ENCODE measurements at regions of chr7 and their contacts with region 1.

Region 1: GRCh38 chr7:101936611-101937231 is 119.3 kb downstream of the CUX1 start:
- DNase-seq: peak; percentile 27
- H3K4me3 ChIP-seq: peak overlapping the region; percentile 20
- H3K27ac ChIP-seq: peak overlapping the region; percentile 82
- H3K4me1 ChIP-seq: peaks cover 100% of the 10 kb centered on the region
- CTCF ChIP-seq: no peak

Region 2: DNA sequence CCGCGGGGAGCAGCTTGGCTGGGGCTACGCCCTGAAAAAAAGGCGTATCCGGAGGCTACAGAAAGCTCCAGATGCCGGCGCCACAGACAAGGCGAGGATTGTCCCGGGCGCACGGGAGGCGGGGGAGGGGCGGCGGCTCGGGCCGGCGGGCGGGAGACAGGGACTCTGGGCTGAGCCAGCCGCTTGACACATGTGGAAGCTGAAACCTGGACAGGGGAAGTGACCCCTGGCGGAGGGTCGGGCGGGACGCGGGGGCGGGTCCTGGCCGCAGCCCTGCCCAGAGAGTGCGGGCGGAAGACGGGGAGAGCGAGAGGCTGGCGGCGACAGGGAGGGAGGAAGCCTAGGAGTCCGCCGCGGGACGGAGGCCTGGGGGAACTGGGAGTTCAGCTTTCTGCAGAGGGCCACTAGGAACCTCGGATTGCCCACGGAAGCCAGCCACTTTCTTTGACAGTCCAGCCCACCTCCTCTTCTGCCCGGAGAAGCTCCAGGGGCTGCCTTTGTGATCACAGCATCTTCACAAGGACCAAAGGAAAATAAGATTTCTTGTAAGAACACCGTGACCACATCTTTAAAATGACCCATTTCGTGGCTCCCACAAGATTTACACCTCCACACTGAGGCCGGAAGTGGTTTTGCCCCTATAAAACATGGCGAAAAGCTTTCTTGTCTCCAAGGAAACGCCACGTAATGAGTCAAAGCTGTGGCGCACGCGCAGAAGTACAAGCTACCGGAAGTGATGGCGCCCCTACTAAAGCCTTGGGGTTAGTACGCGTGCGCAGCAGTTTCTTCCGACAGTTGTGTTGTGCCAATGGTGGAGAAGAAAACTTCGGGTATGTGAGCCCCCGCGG is 719.1 kb before region 1 on chr7 and contains the starts of genes PLOD3 and ZNHIT1:
- CTCF ChIA-PET with region 1: no interaction called
- POLR2A ChIA-PET with region 1: no interaction called
- intact Hi-C with region 1: no loop called
- DNase-seq: peak; percentile 99
- H3K4me3 ChIP-seq: peak within 1 kb of the TSS; percentile 95
- H3K27ac ChIP-seq: peak within 1 kb of the TSS; percentile 48
- H3K4me1 ChIP-seq: peaks cover 18% of the 10 kb centered on the region
- CTCF ChIP-seq: 0 out of 2 replicates have a peak, but pooled peaks have one; percentile 6
- total RNA-seq, gene PLOD3: 9.2 and 12.1 TPM in 2 replicates
- total RNA-seq, gene ZNHIT1: 63.8 and 77.3 TPM in 2 replicates

Region 3: DNA sequence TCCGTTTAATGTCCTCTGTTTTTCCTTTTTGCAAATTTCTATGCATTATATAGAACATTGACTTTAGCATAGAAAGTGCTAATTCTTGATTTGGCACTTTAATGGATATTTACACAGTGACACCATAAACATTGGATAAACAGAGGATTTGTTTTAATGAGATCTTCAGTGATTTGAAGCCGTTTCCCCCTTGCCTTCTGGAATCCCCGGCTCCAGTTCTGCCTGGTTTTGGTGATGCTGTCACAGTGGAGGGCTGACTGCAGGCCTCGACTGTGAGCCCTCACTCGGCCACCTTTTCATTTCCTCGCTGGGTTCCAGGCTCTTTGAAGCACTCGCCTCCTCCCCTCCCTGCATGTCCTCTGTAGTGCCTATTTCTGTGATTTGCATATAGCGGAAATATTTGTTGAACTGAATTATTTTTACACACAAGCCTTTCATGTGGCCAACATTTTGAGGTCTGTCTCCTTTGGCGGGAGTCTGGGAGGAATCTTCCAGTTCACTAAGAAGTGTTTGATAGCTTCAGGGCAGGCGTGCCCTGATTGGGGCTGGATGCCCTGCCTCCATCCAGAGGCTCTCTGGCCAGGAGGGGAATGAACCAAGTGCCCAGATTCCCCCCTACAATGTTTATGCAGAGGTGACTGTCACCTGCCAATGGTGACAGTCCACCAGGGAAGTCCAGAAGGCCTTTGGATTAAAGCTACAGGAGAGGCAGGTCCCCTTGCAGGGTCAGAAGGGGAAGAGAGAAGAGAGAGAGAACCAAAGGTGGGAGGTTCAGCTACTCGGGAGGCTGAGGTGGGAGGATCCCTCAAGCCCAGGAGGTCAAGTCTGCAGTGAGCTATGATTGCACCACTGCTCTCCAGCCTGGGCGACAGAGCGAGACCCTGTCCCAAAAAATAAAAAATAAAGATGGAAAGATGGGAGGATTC is 51.8 kb before region 1 on chr7:
- CTCF ChIA-PET with region 1: interaction called, 3 read pairs
- POLR2A ChIA-PET with region 1: interaction called, 8 read pairs
- intact Hi-C with region 1: loop called (anchors 5 kb)
- DNase-seq: peak; percentile 91
- H3K4me3 ChIP-seq: peak overlapping the region; percentile 61
- H3K27ac ChIP-seq: peak overlapping the region; percentile 93
- H3K4me1 ChIP-seq: peaks cover 100% of the 10 kb centered on the region
- CTCF ChIP-seq: no peak

Region 4: DNA sequence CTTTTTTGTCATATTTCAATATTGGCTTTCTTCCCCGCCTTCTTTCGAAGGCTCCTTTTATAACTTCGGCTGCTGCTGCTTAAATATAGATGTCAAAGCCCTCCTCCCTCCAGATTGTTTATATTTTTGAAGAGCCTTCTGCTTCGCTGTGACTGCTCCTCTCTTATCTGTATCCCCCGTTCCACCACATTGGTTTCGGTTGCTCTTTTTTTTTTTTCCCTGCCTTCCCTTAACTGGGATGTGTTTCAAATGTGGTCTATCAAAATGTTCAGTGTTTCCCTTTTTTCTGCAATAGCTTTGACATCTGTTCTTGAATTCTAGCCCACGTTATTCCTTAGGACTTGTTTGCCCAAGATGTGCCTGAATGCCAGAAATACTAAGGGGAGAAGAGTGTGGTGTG is 22.9 kb before region 1 on chr7:
- CTCF ChIA-PET with region 1: no interaction called
- POLR2A ChIA-PET with region 1: no interaction called
- intact Hi-C with region 1: no loop called
- DNase-seq: no peak
- H3K4me3 ChIP-seq: no peak overlapping the region
- H3K27ac ChIP-seq: no peak overlapping the region
- H3K4me1 ChIP-seq: peaks cover 5% of the 10 kb centered on the region
- CTCF ChIP-seq: no peak

Region 5: DNA sequence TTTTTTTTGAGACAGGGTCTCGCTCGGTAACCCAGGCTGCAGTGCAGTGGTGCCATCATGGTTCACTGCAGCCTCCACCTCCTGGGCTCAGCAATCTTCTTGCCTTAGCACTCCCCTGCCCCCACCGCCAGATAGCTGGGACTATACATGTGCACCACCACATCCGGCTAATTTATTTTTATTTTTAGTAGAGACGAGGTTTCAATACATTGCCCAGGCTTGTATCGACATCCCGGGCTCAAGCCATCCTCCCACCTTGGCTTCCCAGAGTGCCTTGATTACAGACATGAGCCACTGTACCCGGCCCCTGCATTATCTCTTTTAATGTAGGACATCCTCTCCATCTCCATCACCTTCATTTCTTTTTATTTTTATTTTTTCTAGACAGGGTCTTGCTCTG is 94.0 kb after region 1 on chr7:
- CTCF ChIA-PET with region 1: no interaction called
- POLR2A ChIA-PET with region 1: no interaction called
- intact Hi-C with region 1: loop called (anchors 5 kb)
- DNase-seq: peak; percentile 91
- H3K4me3 ChIP-seq: peak overlapping the region; percentile 39
- H3K27ac ChIP-seq: peak overlapping the region; percentile 84
- H3K4me1 ChIP-seq: peaks cover 74% of the 10 kb centered on the region
- CTCF ChIP-seq: no peak

Measured in OCI-LY7 (cell line).